Sciatic nerve (tissue), 2 donors: ENCODE measurements at regions of chr17 and their contacts with region 1.

Region 1: DNA sequence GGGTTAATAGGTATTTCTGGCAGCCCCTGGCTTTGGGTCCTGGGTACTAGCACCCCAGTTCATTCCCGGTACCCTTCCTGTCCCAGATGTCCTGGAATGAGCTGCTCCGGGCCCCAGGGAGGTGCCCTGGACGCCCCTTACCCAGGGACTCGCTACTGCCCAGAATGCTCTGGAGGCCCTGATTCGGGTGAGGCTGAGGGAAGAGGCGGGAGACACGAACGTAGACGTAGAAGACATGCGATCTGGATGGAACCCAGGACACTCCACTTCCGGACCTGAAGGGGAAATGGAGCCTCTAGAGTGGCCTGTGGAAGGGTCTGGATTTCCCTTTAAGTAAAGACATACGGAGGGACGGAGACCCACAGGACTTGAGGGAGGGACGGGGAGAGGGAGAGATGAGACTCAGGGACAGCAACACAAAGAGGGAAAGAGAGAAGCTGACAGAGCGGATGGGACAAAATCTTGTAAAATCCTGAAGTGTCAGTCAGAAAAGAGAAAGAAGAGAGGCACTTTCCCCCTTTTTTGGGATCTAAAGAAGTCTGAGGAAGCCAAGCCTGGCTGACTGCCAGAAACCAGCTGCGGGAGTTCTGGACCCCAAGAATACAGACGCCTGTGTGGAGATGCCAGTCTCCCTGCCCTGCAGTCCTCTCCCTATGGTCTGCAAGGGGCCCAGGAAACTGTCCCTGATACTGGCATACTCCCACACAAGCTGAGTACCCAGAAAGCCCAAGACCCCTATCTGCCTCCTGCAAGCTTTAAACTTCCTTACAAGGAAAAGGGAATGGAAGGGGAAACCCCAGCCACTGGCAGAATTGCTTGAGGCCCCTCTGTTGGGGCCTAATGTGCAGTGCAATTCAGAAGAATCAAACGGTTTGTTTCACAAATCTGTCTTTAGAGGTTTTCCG is 1.0 kb upstream of the HOXB13 start:
- DNase-seq: no peak
- ATAC-seq: no peak

Region 2: GRCh38 chr17:47850692-47851573 is 878.7 kb before region 1 on chr17 and contains the start of gene SP6:
- intact Hi-C with region 1: loop called (anchors 5 kb)
- DNase-seq: no peak
- ATAC-seq: peak; percentile 67
- total RNA-seq, gene SP6: 0.62 TPM